CD4-positive, alpha-beta T cell (primary cell): ENCODE measurements at regions of chr2 and their contacts with region 1.

Region 1: GRCh38 chr2:42494355-42495233 is 812 bp upstream of the KCNG3 start:
- DNase-seq: peak; percentile 52 to 84 (median 68)
- ATAC-seq: peak; percentile 47
- H3K4me3 ChIP-seq: peak overlapping the region; percentile 56
- H3K4me3 Mint-ChIP-seq: peak overlapping the region; percentile 96
- H3K27ac ChIP-seq: no peak overlapping the region
- H3K27ac Mint-ChIP-seq: peak overlapping the region; percentile 68
- H3K4me1 ChIP-seq: peaks cover 17% of the 10 kb centered on the region
- H3K4me1 Mint-ChIP-seq: peaks cover 8% of the 10 kb centered on the region
- H3K27me3 ChIP-seq: peaks cover 0 to 6% of the 10 kb centered on the region in 2 experiments
- H3K27me3 Mint-ChIP-seq: no peaks in the 10 kb centered on the region
- CTCF ChIP-seq: peak; percentile 90

Region 2: GRCh38 chr2:42360890-42361727 is 133.5 kb before region 1 on chr2 and contains the start of gene COX7A2L:
- CTCF ChIA-PET with region 1: no interaction called
- POLR2A ChIA-PET with region 1: interaction called, 3 read pairs
- intact Hi-C with region 1: loop called in 1 of 2 experiments (anchors 2 kb)
- DNase-seq: peak; percentile 93 to 98 (median 96)
- ATAC-seq: peak; percentile 91
- H3K4me3 ChIP-seq: peak within 1 kb of the TSS; percentile 88
- H3K4me3 Mint-ChIP-seq: peak within 1 kb of the TSS; percentile 88
- H3K27ac ChIP-seq: peak within 1 kb of the TSS; percentile 91 to 96
- H3K27ac Mint-ChIP-seq: peak within 1 kb of the TSS; percentile 99
- H3K4me1 ChIP-seq: peaks cover 34% of the 10 kb centered on the region
- H3K4me1 Mint-ChIP-seq: peaks cover 45% of the 10 kb centered on the region
- H3K27me3 ChIP-seq: no peaks in the 10 kb centered on the region
- H3K27me3 Mint-ChIP-seq: no peaks in the 10 kb centered on the region
- CTCF ChIP-seq: no peak
- total RNA-seq, gene COX7A2L: 51.3 to 57.3 TPM